Left colon (tissue), 2 donors: ENCODE measurements at regions of chr14 and their contacts with region 1.

Region 1: DNA sequence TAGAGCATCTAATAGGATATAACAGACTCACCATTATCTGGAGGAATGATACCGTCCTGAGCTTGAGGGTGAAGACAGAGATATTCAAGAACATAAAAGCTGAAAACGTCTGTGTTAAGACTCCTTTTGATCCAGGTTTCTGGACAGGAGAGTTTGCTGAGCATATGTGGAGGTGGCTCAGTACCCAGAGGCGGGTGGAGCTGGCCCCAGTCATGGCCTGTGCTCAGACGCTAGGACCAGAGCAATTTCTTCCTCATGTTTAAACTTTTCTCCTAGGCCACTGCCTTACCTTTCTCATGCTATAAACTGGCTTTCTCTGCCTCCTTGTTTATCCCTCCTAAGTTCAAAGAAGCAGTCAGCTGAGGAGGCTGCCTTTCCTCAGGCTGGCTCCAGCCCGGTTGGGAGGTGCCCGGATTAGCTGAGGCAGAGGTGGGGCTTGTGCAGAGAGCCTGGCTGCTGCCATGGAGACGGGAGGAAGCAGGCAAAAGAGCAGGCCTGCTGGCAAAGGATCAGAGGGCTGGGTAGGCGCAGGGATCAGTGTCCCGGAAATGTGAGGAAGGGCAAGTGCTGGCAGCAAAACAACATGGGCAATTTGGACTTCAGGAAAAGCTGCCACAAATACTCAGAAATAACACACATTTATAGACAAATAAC is 13.7 kb downstream of the COA8 start:
- DNase-seq: peak; percentile 93 to 98
- ATAC-seq: peak; percentile 95

Region 2: GRCh38 chr14:103628684-103629502 is 52.4 kb after region 1 on chr14 and contains the start of gene KLC1:
- intact Hi-C with region 1: loop called in 1 of 2 experiments (anchors 10 kb)
- DNase-seq: peak; percentile 78 to 90
- ATAC-seq: peak; percentile 76
- total RNA-seq, gene KLC1: 83.6 to 88.0 TPM

Region 3: DNA sequence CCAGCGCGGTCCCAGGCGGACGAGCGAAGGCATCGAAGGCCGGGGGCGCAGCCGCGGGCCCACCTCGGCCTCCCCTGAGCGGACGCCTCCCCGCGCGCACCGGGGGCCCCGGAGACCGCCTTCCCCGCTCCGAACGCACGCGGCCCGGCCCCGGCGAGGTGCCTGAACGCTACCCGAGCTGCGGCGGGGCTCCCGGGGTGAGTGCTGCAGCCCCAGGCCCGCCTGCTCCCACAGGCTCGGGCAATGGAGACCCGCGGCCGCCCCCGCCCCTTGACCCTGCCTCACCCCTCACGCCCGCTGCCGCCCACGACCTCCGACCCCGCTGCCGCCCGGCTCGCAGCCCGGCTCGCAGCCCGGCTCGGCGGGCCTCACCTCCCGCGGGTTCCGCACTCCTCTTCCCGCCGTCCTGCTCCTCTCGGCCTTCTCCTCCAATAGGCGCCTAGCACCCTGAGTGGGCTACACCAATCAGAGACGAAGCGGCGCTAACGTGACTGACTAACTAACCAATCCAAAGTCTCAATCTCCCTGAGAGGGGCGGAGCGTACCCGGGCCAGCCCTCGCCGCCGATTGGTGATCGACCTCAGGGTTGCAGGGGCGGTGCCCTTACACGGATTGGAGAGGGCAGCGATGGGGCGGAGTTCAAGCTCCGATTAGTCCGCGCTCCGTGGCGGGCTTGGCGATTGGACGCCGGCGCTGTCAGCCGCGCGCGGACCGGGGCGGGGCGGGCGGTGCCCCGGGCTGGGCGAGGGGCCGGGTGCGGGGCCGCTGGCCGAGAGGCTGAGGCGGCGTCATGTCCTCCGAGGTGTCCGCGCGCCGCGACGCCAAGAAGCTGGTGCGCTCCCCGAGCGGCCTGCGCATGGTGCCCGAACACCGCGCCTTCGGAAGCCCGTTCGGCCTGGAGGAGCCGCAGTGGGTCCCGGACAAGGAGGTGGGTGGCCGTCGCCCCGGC is 138.8 kb after region 1 on chr14 and contains the starts of genes XRCC3 and ZFYVE21:
- intact Hi-C with region 1: loop called in 1 of 2 experiments (anchors 10 kb)
- DNase-seq: peak; percentile 100
- ATAC-seq: peak; percentile 73
- total RNA-seq, gene XRCC3: 7.9 to 16.2 TPM
- total RNA-seq, gene ZFYVE21: 51.2 to 54.9 TPM